ENCODE measurements at regions of chr14 and their contacts with region 1.

Region 1: DNA sequence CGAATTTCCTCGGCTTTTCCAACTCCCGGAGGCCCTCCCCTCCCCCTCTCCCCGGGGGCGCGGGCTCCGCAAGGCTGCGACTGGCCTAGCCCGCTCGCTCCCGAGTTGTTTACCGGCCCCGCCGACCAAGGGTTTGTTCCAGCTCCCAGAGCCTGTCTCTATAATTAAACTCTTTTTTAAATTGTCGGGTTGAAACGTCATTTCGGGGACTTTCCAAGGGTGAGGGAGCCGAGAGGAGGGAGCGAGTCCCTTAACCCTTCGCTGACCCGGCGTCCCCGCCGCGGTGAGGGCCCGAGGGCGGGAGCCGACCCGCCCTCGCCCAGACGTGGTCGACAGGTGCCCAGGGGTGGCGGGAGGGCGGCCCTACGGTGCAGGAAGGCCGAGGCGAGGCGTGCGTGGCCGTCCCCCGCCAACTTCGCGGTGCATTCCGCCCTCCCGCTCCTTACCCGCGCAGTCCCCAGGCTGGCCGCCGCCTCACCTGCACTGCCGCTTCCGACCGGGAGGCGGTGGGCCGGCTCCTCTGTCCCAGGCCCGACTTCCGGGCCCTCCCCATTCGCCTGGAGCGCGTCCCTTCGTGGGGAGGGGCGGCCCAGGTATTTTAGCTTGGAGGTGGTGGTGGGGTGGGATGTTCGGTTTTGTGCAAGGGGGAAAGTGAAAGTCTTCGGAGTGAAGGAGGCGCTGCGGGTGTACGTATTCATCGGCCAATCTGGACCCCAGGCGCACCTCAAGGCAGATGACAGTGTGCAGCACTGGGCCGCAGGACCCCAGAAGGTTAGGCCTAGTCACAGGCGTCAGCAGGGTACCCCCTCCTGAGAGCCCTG is 2.9 kb upstream of the ZFP36L1 start:
- DNase-seq: peak; percentile 81
- H3K4me3 Mint-ChIP-seq: peak overlapping the region; percentile 98
- H3K27ac Mint-ChIP-seq: peak overlapping the region; percentile 97
- H3K4me1 Mint-ChIP-seq: peaks cover 15% of the 10 kb centered on the region
- H3K27me3 Mint-ChIP-seq: no peaks in the 10 kb centered on the region
- CTCF ChIP-seq: peak; percentile 72

Region 2: DNA sequence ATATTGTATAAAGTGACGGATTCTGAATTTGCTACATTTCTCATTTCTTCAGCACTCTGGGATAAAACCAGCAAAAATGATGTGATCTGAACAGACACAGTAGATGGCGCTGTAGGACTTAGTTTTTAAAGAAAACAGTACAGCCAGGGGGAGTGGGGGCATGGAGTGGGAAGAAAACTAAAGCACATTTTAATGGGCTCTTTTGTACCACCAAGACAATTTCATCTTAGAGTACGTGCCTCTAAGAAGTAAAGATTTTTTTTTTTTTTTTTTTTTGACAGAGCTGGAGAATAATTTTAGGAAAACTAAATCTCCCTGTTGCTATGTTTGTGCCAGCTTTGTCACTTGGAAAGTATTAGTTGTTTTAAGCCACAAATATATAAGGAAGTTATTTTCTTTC is 851.9 kb before region 1 on chr14:
- CTCF ChIA-PET with region 1: interaction called, 5 read pairs
- POLR2A ChIA-PET with region 1: interaction called, 22 read pairs
- intact Hi-C with region 1: no loop called
- DNase-seq: peak; percentile 77
- H3K4me3 Mint-ChIP-seq: no peak overlapping the region
- H3K27ac Mint-ChIP-seq: peak overlapping the region; percentile 81
- H3K4me1 Mint-ChIP-seq: peaks cover 39% of the 10 kb centered on the region
- H3K27me3 Mint-ChIP-seq: no peaks in the 10 kb centered on the region
- CTCF ChIP-seq: peak; percentile 81

Region 3: DNA sequence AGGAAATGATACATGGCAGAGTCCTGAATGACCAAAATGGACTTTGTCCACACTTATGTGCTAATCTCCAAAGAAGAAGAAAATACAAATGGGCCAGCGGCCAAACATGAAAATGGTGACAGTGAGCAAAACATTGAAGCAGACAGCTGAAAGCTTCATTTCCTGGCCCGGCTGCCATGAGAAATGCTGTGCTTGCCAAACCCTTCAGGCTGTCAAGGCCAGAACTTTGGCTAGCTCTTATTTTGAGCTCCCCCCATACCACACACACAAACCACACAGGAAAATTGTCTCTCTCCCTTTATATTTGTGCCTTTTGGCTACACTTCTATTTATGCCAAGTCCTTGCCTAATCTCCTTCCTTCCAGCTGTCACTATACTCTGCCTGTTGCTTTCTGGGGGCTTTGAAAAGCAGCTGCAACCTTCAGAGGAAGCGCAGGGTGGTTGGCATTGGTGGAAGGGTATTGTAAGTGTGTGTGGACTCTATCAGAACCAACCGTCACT is 652.4 kb before region 1 on chr14:
- CTCF ChIA-PET with region 1: no interaction called
- POLR2A ChIA-PET with region 1: interaction called, 19 read pairs
- intact Hi-C with region 1: loop called (anchors 5 kb)
- DNase-seq: peak; percentile 82
- H3K4me3 Mint-ChIP-seq: no peak overlapping the region
- H3K27ac Mint-ChIP-seq: peak overlapping the region; percentile 95
- H3K4me1 Mint-ChIP-seq: peaks cover 77% of the 10 kb centered on the region
- H3K27me3 Mint-ChIP-seq: no peaks in the 10 kb centered on the region
- CTCF ChIP-seq: no peak

Region 4: DNA sequence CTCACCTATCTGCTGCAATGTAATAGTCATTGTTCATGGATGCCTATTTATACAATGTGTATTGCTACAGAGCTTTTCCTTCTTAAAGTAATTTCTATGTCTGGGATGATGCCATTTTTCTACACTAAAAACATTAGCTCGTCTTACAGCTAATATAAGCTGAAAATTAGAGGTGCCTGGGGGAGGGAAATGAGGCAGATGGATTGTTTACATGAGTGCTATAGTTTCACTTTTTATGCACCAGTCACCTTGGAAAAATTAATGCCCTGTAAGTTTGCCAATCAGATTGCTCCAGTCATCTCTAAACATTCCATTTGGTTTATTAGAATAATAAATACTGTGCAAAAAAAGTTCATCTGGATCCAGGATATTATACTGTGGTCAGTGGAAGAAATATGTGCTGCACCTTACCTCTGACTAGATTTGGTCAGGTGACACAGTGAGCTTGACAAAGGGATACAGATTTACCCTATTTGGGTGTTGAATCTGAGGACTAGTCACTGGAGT is 540.1 kb before region 1 on chr14:
- CTCF ChIA-PET with region 1: interaction called, 72 read pairs
- POLR2A ChIA-PET with region 1: interaction called, 267 read pairs
- intact Hi-C with region 1: no loop called
- DNase-seq: no peak
- H3K4me3 Mint-ChIP-seq: no peak overlapping the region
- H3K27ac Mint-ChIP-seq: peak overlapping the region; percentile 93
- H3K4me1 Mint-ChIP-seq: peaks cover 41% of the 10 kb centered on the region
- H3K27me3 Mint-ChIP-seq: no peaks in the 10 kb centered on the region
- CTCF ChIP-seq: no peak

Region 5: DNA sequence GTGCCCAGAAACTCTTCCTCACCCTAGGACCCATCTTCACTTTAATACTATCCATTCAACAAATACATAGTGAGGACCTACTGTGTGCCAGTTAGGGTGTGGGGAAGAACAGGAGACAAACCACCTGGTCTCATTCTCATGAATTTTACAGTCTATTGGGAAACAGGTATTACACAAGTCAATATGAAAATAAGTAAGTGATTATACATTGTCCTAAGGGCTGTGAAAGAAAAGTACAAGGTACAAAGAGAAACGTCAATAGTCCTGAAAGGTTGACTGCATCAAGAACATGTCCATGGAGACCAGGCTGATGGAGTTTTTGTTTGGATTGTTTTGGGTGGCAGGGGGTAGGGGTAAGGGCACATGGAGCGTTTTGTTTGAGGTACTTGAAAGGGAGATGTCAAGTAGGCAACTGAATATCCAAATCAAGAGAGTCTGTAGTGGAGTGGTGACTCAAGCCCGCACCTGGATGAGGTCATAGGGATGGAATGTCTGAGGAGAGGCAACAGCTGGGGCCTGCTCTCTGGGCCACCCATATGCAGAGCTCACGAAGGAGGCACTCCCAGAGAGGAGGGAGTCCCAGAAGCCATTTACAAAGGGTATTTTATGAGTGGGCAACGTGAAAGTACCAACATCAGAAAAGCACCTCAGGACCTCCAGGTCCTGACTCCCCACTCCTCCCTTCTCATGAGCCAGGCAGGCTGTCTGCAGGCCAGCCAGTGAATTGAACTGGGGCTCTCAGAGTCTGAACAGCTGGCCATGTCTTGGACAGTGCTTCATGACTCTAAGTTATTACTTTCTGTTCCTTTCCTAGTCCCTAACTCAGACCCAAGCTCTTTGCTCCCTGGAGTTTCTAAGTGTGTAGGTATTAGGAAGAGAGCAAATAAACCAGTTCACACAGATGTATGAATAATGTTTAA is 274.9 kb before region 1 on chr14:
- CTCF ChIA-PET with region 1: interaction called, 4 read pairs
- POLR2A ChIA-PET with region 1: interaction called, 17 read pairs
- intact Hi-C with region 1: no loop called
- DNase-seq: peak; percentile 83
- H3K4me3 Mint-ChIP-seq: peak overlapping the region; percentile 28
- H3K27ac Mint-ChIP-seq: peak overlapping the region; percentile 98
- H3K4me1 Mint-ChIP-seq: peaks cover 34% of the 10 kb centered on the region
- H3K27me3 Mint-ChIP-seq: no peaks in the 10 kb centered on the region
- CTCF ChIP-seq: no peak

Region 6: DNA sequence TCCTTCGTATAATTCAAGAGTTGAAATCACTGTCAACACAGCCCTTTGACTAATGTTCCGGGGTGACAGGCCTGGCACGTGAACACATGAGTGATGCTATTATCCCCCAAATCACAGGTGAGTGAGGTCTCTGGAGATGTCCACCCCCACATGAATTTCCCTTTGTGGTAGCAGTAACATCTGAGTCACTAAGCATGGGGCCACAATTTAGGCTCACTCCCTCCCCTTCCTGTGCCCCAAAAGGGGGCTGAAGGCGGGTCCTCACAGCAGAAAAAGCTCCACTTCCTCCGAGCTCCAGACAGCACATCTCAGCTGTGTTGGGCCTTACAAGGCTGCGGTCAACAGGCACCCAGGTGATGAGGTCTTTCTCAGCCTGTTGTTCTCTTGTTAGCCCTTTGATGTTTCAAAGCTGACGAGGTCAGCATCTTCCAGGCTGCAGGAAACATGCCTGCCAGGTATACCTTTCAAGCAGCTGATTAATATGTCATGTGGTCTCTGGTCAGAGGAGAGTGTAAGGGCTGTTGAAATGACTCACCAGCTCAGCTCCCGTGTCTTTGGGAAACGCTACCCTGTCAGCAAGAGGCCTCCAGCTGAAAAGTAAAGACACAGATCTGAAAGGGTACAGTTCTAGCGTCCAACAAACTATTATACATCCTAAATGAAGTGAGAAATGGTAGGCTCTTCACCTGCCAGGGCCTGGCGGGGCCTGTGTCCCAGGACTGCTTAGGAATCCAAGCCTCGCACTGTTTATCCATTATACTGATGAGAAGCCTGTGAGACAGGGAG is 110.2 kb before region 1 on chr14:
- CTCF ChIA-PET with region 1: interaction called, 3 read pairs
- POLR2A ChIA-PET with region 1: interaction called, 229 read pairs
- intact Hi-C with region 1: no loop called
- DNase-seq: peak; percentile 91
- H3K4me3 Mint-ChIP-seq: peak overlapping the region; percentile 1
- H3K27ac Mint-ChIP-seq: peak overlapping the region; percentile 96
- H3K4me1 Mint-ChIP-seq: peaks cover 67% of the 10 kb centered on the region
- H3K27me3 Mint-ChIP-seq: no peaks in the 10 kb centered on the region
- CTCF ChIP-seq: no peak

Region 7: GRCh38 chr14:68757618-68758081 is 38.2 kb before region 1 on chr14:
- CTCF ChIA-PET with region 1: no interaction called
- POLR2A ChIA-PET with region 1: no interaction called
- intact Hi-C with region 1: no loop called
- DNase-seq: no peak
- H3K4me3 Mint-ChIP-seq: no peak overlapping the region
- H3K27ac Mint-ChIP-seq: no peak overlapping the region
- H3K4me1 Mint-ChIP-seq: no peaks in the 10 kb centered on the region
- H3K27me3 Mint-ChIP-seq: no peaks in the 10 kb centered on the region
- CTCF ChIP-seq: no peak

Region 8: DNA sequence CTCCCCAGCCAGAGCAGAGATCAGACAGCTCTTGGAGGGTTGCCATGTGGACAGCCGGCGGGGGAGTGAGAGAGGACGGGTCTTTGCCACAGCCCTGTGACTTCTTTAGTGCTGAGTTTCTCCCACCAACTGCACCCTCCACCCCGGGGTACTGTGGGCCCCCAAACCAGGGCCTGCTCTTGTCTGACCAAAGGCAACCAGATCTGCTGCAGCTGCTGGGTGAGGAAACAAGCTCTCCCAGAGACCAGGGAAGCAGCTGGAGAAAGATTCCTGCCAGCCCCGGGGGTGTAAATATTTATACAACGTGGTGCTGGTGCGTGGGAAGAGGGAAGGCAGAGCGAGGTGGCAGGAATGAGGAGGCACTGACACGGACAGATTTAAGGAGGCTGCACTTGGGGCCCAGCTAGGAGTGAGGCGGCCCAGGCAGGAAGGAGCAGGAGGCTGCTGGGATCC is 11.4 kb after region 1 on chr14:
- CTCF ChIA-PET with region 1: interaction called, 4 read pairs
- POLR2A ChIA-PET with region 1: interaction called, 18 read pairs
- intact Hi-C with region 1: no loop called
- DNase-seq: peak; percentile 65
- H3K4me3 Mint-ChIP-seq: no peak overlapping the region
- H3K27ac Mint-ChIP-seq: peak overlapping the region; percentile 84
- H3K4me1 Mint-ChIP-seq: peaks cover 11% of the 10 kb centered on the region
- H3K27me3 Mint-ChIP-seq: no peaks in the 10 kb centered on the region
- CTCF ChIP-seq: no peak

Region 9: GRCh38 chr14:68987653-68988036 is 191.8 kb after region 1 on chr14:
- CTCF ChIA-PET with region 1: no interaction called
- POLR2A ChIA-PET with region 1: no interaction called
- intact Hi-C with region 1: no loop called
- DNase-seq: peak; percentile 33
- H3K4me3 Mint-ChIP-seq: no peak overlapping the region
- H3K27ac Mint-ChIP-seq: peak overlapping the region; percentile 63
- H3K4me1 Mint-ChIP-seq: peaks cover 20% of the 10 kb centered on the region
- H3K27me3 Mint-ChIP-seq: no peaks in the 10 kb centered on the region
- CTCF ChIP-seq: no peak